Activated B cell treated with CpG ODN at 0.5 μM for 24 hours (primary cell): ENCODE measurements at regions of chr5 and their contacts with region 1.

Region 1: DNA sequence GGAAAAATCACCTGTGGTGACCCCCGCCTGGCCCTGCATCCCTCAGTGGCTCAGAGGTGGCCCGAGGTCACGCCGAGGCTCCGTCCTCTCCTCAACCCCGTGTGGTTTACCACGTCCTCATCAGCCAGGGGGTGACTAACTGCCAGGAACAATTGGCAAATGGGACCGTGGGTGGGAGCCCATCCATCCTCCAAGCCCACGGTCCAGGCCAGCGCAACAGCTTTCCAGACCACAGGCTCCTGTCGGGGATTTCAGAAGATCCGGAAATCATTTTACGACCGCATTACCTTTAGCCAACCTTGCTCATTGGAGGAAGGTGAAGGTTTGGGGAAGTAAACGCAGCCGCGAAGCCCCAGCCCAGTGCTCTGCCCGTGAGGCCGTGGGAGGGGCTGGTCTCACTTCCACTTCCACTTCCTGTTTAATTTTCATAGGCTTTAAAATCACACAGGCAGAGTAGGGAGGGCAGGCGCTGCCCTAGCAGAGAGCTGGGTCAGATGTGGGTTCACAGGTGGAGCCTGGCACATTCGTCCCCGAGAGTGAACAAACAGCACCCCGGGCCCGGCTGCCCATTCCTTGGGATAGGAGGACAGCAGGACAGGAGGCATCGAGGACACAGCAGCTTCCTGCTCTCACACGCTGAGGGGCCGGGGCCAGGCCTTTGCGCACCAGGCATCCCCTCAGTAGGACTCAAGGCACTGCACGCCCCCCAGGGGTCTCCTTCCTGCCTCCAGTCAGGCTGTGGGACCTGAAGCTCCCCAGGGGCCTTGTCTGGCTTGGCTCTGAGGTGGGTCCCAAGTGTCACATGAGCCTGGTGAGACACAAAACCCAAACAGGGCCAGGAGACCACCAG is 19.8 kb upstream of the SLC9A3 start:
- DNase-seq: peak; percentile 64
- ATAC-seq: peak; percentile 96
- H3K4me3 Mint-ChIP-seq: peak overlapping the region; percentile 65
- H3K27ac Mint-ChIP-seq: peak overlapping the region; percentile 85
- H3K4me1 Mint-ChIP-seq: peaks cover 36% of the 10 kb centered on the region
- H3K27me3 Mint-ChIP-seq: peaks cover 20% of the 10 kb centered on the region
- CTCF ChIP-seq: no peak

Region 2: GRCh38 chr5:472656-473553 is 71.1 kb before region 1 on chr5:
- CTCF ChIA-PET with region 1: no interaction called
- POLR2A ChIA-PET with region 1: interaction called, 4 read pairs
- intact Hi-C with region 1: loop called (anchors 2 kb)
- DNase-seq: peak; percentile 97
- ATAC-seq: peak; percentile 86
- H3K4me3 Mint-ChIP-seq: peak overlapping the region; percentile 78
- H3K27ac Mint-ChIP-seq: peak overlapping the region; percentile 53
- H3K4me1 Mint-ChIP-seq: peaks cover 31% of the 10 kb centered on the region
- H3K27me3 Mint-ChIP-seq: peaks cover 21% of the 10 kb centered on the region
- CTCF ChIP-seq: no peak

Region 3: GRCh38 chr5:528625-529511 is 15.2 kb before region 1 on chr5:
- CTCF ChIA-PET with region 1: interaction called, 3 read pairs
- POLR2A ChIA-PET with region 1: interaction called, 11 read pairs
- intact Hi-C with region 1: loop called (anchors 1 kb)
- DNase-seq: no peak
- ATAC-seq: no peak
- H3K4me3 Mint-ChIP-seq: peak overlapping the region; percentile 39
- H3K27ac Mint-ChIP-seq: no peak overlapping the region
- H3K4me1 Mint-ChIP-seq: peaks cover 57% of the 10 kb centered on the region
- H3K27me3 Mint-ChIP-seq: peaks cover 52% of the 10 kb centered on the region
- CTCF ChIP-seq: no peak

Region 4: DNA sequence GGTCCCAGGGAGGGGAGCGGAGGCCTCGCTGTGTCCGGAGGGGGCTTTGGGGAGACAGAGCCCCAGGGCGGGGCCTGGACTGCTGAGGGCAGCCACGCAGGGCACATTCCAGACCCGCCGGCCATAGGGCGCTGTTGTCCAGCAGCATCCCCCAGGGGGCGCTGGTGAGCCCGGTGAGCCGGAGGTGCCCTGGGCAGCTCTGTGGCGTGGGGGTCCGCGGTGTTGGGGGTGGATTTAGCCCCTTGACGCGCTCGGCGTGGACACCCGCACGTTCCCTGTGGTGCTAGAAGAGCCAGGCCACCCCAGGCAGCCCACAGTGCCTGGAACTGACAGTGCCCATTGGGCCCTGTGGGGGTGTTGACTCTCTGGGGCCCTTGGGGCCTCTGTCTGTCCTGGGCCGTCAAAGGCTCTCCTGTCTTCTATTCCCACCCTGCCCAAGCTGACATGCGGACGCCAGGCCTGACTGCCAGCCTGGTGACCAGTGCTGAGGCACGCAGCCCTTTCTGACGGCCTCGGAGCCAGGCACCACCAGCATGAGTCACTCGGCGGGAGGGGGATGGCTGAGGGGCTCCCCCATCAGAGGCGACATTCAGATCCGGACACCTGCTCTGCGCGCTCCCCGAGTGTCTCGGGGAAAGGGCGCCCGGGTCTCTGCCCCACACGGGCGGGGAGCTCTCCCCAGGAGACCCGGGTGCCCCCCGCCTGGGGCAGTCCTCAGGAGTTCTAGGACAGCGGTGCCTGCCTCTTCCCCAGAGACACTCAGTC is 125.2 kb after region 1 on chr5:
- CTCF ChIA-PET with region 1: no interaction called
- POLR2A ChIA-PET with region 1: no interaction called
- intact Hi-C with region 1: no loop called
- DNase-seq: peak; percentile 40
- ATAC-seq: peak; percentile 32
- H3K4me3 Mint-ChIP-seq: no peak overlapping the region
- H3K27ac Mint-ChIP-seq: no peak overlapping the region
- H3K4me1 Mint-ChIP-seq: peaks cover 13% of the 10 kb centered on the region
- H3K27me3 Mint-ChIP-seq: peaks cover 8% of the 10 kb centered on the region
- CTCF ChIP-seq: no peak

Region 5: GRCh38 chr5:1799602-1800471 is 1255.8 kb after region 1 on chr5 and contains the start of gene MRPL36:
- CTCF ChIA-PET with region 1: no interaction called
- POLR2A ChIA-PET with region 1: no interaction called
- intact Hi-C with region 1: loop called (anchors 5 kb)
- DNase-seq: peak; percentile 81
- ATAC-seq: peak; percentile 73
- H3K4me3 Mint-ChIP-seq: peak within 1 kb of the TSS; percentile 98
- H3K27ac Mint-ChIP-seq: peak within 1 kb of the TSS; percentile 97
- H3K4me1 Mint-ChIP-seq: peaks cover 46% of the 10 kb centered on the region
- H3K27me3 Mint-ChIP-seq: no peaks in the 10 kb centered on the region
- CTCF ChIP-seq: no peak
- total RNA-seq, gene MRPL36: 28.7 and 32.8 TPM in 2 replicates